ENCODE measurements at regions of chr1 and their contacts with region 1.

Region 1: DNA sequence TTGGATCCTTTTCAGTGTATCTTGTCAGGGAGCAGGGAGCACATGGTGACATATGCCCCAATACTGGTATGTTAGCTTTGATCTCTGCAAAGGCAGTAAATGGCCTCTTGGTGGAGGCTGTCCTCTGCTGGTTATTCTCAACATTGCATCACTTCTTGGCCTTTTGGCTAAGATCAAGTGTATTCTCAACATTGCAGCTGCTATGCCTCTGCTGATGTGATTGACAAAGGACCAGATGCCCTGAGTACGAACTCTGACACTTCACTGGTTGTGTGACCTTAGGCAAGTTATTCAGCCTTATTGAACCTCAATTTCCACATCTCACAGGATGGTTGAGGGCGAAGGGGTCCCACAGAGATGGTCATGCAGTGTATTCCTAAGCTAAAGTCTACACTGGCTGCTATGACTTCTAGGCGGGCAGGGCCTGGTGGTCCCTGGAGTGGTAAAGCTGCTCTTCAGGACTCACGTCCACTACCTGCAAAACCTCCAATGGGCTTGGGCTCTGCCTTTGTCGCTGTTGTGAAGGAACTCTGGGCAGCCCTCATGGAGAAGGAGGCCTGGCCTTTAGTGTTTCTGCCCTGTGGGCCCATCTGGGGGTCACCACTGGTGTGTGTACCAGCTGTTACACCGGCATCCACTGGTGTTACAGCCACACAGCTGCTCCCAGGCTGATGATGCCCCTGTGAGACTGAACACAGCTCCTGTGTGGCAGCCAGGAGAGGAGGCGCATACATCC is 64.8 kb downstream of the DNTTIP2 start:
- DNase-seq: no peak
- ATAC-seq: peak; percentile 81 to 82
- H3K4me3 ChIP-seq: no peak overlapping the region
- H3K27ac ChIP-seq: no peak overlapping the region
- H3K4me1 ChIP-seq: peaks cover 35% of the 10 kb centered on the region
- H3K27me3 ChIP-seq: no peaks in the 10 kb centered on the region
- CTCF ChIP-seq: peak; percentile 96

Region 2: DNA sequence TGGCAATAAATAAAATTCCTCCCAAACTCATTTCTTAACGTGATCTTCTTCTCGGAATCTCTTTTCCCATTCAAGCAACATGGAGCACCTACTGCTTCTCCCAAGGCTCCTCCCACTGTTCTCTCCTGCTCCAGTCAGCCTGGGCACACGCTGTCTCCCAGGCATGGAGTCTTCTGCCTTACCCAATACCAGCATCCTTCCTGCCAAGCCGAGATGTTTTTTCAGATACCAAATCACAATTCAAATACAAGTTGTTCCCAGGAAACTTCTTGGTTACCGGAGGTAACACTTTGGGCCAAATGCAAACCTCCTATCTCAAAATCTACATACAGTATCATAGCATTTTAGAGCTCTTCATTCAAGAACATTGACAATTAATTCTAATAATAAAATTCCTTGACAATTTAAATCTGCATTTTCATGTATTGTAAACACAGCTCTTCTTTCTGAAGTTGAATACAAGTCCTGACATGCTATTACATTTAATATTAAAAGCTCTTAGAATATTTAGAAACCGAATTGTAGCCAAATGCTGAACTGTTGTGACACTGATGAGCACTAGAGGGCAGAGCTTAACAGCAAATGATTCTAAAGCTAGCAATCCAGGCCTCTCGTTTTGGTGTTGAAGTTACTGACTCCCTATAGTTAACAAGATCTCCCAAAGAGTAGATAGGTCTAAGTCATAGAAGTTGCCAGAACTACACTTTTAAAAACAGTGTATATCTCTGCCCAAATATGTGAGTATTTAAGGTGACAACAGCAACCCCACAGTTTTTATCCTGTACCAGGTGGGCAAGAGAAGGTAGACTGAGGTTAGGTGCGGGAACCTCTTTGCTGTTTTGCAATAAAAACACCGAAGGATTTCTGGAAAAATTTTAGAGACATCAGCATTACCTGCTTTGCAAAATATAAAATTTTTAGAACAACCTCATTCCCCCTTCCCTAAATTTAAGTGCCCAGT is 184.8 kb before region 1 on chr1:
- intact Hi-C with region 1: loop called (anchors 10 kb)
- DNase-seq: no peak
- ATAC-seq: peak; percentile 83 to 84
- H3K4me3 ChIP-seq: no peak overlapping the region
- H3K27ac ChIP-seq: peak overlapping the region; percentile 32
- H3K4me1 ChIP-seq: peaks cover 18% of the 10 kb centered on the region
- H3K27me3 ChIP-seq: no peaks in the 10 kb centered on the region
- CTCF ChIP-seq: peak; percentile 82

Measured in lower lobe of right lung (tissue), 2 donors.